ENCODE measurements at regions of chr5 and their contacts with region 1.

Region 1: GRCh38 chr5:57779383-57780223 is 297.0 kb upstream of the ACTBL2 start:
- DNase-seq: peak; percentile 56 to 69 (median 57)
- H3K4me3 ChIP-seq: no peak overlapping the region
- H3K27ac ChIP-seq: no peak overlapping the region
- H3K4me1 ChIP-seq: no peaks in the 10 kb centered on the region
- H3K27me3 ChIP-seq: peaks cover 0 to 2% (median 0%) of the 10 kb centered on the region in 5 experiments

Region 2: GRCh38 chr5:57298295-57298984 is 481.2 kb before region 1 on chr5:
- CTCF ChIA-PET with region 1: interaction called, 12 read pairs
- POLR2A ChIA-PET with region 1: no interaction called
- DNase-seq: peak; percentile 86 to 93 (median 87)
- H3K4me3 ChIP-seq: peak overlapping the region in 4 of 7 experiments; percentile 41 to 57 (median 54)
- H3K27ac ChIP-seq: no peak overlapping the region
- H3K4me1 ChIP-seq: peaks cover 6 to 14% (median 8%) of the 10 kb centered on the region in 4 experiments
- H3K27me3 ChIP-seq: no peaks in the 10 kb centered on the region

Region 3: DNA sequence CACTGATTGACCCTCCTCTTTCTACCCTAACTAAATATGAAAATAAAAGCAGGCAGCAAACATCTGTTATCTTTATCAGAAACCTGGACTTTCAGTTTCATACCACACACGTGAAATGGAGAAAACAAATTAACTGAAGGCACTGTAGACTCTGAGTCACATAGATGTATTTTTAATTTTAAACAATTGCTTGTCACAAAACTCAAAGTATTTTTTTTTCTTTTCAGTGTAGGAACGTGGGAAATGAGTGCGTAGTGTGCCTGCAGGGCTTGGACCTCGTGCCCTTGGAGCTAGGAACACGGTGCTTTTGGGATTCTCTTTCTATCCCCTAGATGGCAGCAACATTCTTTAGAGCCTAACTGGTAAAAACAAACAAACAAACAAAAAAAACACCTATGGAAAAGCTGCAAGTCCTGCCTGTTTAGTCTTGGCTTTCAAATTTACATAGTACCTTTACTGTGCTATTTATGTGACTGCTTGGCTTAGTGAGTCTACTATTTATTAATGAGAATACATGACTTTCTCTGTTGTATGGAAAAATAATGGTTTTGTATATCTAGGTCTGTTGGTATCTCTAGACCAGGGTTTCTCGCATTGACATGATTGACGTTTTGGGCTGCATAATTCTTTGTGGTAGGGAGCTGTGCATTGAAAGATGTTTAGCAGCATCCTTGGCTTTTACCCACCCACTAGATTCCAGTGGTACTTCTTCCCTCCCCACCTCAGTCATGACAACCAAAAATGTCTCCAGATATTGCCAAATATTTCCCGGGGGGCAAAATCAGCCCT is 280.1 kb before region 1 on chr5:
- CTCF ChIA-PET with region 1: interaction called, 34 read pairs
- POLR2A ChIA-PET with region 1: no interaction called
- DNase-seq: peak; percentile 49 to 77 (median 64)
- H3K4me3 ChIP-seq: peak overlapping the region in 4 of 7 experiments; percentile 8 to 62 (median 28)
- H3K27ac ChIP-seq: no peak overlapping the region
- H3K4me1 ChIP-seq: peaks cover 20 to 75% (median 52%) of the 10 kb centered on the region in 4 experiments
- H3K27me3 ChIP-seq: no peaks in the 10 kb centered on the region

Region 4: GRCh38 chr5:57598756-57599155 is 180.8 kb before region 1 on chr5:
- CTCF ChIA-PET with region 1: no interaction called
- POLR2A ChIA-PET with region 1: no interaction called
- DNase-seq: peak in 1 of 3 donors; percentile 6
- H3K4me3 ChIP-seq: no peak overlapping the region
- H3K27ac ChIP-seq: no peak overlapping the region
- H3K4me1 ChIP-seq: peaks cover 4 to 13% (median 8%) of the 10 kb centered on the region in 4 experiments
- H3K27me3 ChIP-seq: no peaks in the 10 kb centered on the region

Region 5: DNA sequence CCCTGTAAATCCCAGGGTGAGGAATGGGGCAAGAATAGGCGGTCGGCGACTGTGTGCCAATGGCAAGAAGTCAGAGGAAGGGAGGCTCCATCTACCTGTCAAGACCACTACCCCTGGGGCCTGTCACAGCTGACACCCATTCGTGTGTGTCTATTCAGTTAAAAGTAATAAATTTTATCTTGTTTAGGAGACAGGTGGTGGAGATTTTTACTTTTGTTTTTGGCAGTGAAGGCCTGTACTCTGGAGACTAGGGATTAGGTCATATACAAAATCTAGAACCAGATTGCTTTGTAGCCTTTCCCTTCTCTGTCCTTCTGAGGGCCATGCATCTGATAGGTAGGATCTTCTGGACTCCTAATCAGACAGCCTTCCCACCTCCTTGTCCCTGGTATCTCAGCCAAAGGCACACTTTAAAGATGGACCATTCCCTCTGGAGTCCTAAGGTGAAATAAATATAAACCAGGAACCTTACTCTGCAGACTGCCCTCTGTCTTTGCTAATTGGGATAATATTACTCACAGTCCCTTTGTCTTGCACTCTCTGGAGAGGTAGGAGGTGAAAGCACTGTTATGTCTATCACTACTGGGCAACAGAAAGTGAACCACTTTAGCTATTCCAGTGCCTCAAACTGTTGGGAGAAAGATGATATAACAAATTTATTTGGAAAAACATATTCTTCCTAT is 83.8 kb before region 1 on chr5:
- CTCF ChIA-PET with region 1: no interaction called
- POLR2A ChIA-PET with region 1: no interaction called
- DNase-seq: no peak
- H3K4me3 ChIP-seq: no peak overlapping the region
- H3K27ac ChIP-seq: no peak overlapping the region
- H3K4me1 ChIP-seq: no peaks in the 10 kb centered on the region
- H3K27me3 ChIP-seq: no peaks in the 10 kb centered on the region

Region 6: GRCh38 chr5:57754616-57755015 is 25.0 kb before region 1 on chr5:
- CTCF ChIA-PET with region 1: interaction called, 12 read pairs
- POLR2A ChIA-PET with region 1: no interaction called
- DNase-seq: no peak
- H3K4me3 ChIP-seq: no peak overlapping the region
- H3K27ac ChIP-seq: no peak overlapping the region
- H3K4me1 ChIP-seq: no peaks in the 10 kb centered on the region
- H3K27me3 ChIP-seq: no peaks in the 10 kb centered on the region

Region 7: GRCh38 chr5:57887851-57888621 is 108.4 kb after region 1 on chr5:
- CTCF ChIA-PET with region 1: interaction called, 14 read pairs
- POLR2A ChIA-PET with region 1: no interaction called
- DNase-seq: peak; percentile 52 to 69 (median 69)
- H3K4me3 ChIP-seq: no peak overlapping the region
- H3K27ac ChIP-seq: no peak overlapping the region
- H3K4me1 ChIP-seq: peaks cover 0 to 3% (median 0%) of the 10 kb centered on the region in 4 experiments
- H3K27me3 ChIP-seq: no peaks in the 10 kb centered on the region